Adrenal gland (tissue), 19 donors: ENCODE measurements at regions of chr11 and their contacts with region 1.

Region 1: DNA sequence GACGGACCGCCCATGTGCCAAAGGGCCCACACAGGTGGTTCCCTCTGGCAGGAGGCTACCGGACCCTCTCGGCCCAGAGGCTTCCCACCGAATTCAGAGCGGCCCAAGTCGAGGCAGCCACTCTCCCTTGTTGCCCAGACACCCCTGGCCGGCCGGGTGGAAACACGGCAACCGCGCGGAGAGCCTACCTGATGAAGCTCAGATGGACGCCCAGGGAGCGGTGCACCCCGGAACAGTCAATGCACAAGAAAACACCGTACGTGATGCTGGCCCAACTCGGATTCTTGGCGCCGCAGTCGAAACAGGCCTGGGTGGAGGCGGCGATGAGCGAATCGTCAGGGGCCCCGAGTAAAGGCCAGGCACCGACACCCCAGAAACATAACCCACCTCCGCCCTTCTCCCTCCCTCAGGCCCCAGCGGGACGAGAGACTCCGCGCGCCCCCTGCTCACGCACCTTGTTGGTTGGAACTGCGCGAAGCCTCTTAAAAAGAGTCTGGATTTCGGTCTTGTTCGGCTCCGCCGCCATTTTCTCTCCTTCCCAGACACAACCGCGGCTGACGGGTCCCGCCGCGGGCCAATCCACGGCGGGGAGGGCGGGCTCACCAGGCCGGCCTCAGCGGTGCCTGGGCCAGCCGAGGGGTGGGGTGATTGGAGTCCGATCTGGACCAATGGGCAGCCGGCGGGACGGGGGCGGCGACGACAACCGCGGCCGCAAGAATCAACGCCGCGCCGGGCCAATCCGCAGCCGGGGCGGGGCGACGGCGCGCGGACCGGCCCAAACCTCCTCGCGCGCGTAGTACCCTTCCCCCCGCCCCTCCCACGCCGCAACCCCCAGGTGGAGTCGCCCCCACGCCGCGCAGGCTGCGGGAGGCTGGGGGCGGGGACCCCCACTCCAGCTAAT is at the start of gene ARFGAP2:
- DNase-seq: peak; percentile 96 to 98 (median 97)
- H3K4me3 ChIP-seq: peak within 1 kb of the TSS; percentile 84 to 97 (median 96)
- H3K27ac ChIP-seq: peak within 1 kb of the TSS; percentile 91 to 99 (median 97)
- H3K4me1 ChIP-seq: peaks cover 24 to 40% of the 10 kb centered on the region in 2 donors
- H3K27me3 ChIP-seq: no peaks in the 10 kb centered on the region
- CTCF ChIP-seq: no peak
- POLR2A ChIP-seq: peak in 1 of 2 donors; percentile 51
- total RNA-seq, gene ARFGAP2: 74.4 to 411 (median 122) TPM

Region 2: DNA sequence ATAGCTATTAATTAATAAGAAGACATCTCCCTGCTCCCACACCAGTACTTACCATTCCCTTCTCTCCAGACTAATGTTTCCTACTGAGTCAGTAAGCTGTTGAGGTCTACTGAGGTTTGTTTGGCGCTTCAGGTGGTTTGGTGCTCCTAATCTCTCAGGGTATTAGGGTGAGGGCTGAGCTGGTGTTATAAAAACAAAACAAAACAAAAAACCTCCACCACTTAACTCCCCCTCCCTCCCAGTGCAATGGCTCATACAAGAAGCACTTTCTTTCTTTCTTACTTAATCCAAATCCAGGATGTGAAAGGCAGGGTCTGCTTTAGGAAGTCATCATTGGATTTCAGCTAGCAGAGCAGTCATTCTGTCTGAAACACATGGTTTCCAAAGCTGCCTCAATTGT is 224.7 kb before region 1 on chr11:
- intact Hi-C with region 1: no loop called
- DNase-seq: no peak
- H3K4me3 ChIP-seq: no peak overlapping the region
- H3K27ac ChIP-seq: no peak overlapping the region
- H3K4me1 ChIP-seq: peaks cover 0 to 13% of the 10 kb centered on the region in 2 donors
- H3K27me3 ChIP-seq: no peaks in the 10 kb centered on the region
- CTCF ChIP-seq: no peak
- POLR2A ChIP-seq: no peak

Region 3: GRCh38 chr11:47216121-47216798 is 39.7 kb after region 1 on chr11:
- intact Hi-C with region 1: loop called in 1 of 2 experiments (anchors 5 kb)
- DNase-seq: peak; percentile 53 to 84 (median 79)
- H3K4me3 ChIP-seq: peak overlapping the region in 2 of 4 donors; percentile 44 to 66
- H3K27ac ChIP-seq: peak overlapping the region in 3 of 5 donors; percentile 91 to 95 (median 94)
- H3K4me1 ChIP-seq: peaks cover 33 to 45% of the 10 kb centered on the region in 2 donors
- H3K27me3 ChIP-seq: no peaks in the 10 kb centered on the region
- CTCF ChIP-seq: no peak
- POLR2A ChIP-seq: no peak

Region 4: DNA sequence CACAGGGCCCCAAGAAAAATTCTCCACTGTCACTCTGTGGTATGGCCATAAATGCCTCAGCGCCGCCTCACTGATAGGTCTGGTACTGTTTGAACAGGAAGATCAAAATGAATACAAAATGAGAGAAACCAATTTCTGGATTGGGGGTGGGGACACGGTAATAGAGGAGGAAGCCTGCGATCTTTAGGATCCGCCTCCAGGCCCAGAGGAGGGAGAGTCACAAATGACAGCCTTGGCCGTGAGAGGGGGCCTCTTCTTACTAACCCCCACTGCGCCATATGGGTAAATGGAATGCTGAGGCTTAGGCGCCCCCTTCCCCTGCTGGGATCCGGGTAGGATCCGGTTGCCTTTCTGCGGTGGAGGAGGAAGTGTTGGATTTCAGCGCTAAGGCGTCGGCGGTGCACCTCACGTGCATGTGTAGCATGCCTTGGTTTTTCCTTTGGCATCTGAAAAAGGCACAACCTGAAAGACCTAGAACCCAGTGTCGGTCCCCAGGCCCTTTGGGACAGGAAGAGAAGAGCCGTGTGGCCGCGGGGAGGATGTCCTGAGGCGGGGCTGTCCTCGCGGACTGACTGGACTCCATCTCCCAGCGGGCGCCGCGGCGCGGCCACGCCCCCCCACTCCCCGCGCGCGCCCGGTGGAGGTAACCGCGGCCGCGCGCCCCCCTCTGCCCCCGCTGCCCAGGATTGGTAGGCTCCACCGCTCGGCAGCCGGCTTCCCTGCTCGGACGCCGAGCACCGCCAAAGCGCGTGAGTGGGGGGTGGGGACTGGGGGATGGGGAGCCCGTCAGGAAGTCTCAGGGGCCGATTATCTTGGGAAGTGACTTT is 92.6 kb after region 1 on chr11:
- intact Hi-C with region 1: loop called (anchors 5 to 10 kb)
- DNase-seq: peak; percentile 92 to 95 (median 94)
- H3K4me3 ChIP-seq: peak overlapping the region in 3 of 4 donors; percentile 40 to 89 (median 44)
- H3K27ac ChIP-seq: peak overlapping the region; percentile 65 to 98 (median 91)
- H3K4me1 ChIP-seq: peaks cover 5 to 48% of the 10 kb centered on the region in 2 donors
- H3K27me3 ChIP-seq: no peaks in the 10 kb centered on the region
- CTCF ChIP-seq: peak in 3 of 6 experiments; percentile 26 to 54 (median 30)
- POLR2A ChIP-seq: peak in 1 of 2 donors; percentile 26

Region 5: DNA sequence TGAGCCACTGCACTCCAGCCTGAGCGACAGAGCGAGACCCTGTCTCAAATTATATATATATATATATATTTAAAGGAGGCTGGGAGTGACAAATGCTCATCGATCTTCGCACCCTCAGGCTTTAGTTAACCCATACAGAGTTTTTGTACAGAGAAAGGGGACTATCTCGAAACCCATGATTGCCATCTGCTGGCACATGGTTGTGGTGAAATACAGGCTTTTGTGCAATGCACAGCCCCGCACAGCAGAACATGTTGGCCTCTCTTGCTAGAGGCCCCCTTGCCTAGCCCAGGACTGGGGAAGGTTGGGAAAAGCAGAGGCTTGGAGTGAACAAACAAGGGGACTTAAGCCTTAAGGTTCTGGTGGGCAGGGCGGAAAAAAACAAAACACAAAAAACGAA is 172.3 kb after region 1 on chr11:
- intact Hi-C with region 1: loop called (anchors 5 kb)
- DNase-seq: peak in 3 of 7 donors; percentile 39 to 65 (median 44)
- H3K4me3 ChIP-seq: no peak overlapping the region
- H3K27ac ChIP-seq: no peak overlapping the region
- H3K4me1 ChIP-seq: peaks cover 14 to 16% of the 10 kb centered on the region in 2 donors
- H3K27me3 ChIP-seq: no peaks in the 10 kb centered on the region
- CTCF ChIP-seq: peak in 4 of 6 experiments; percentile 12 to 31 (median 16)
- POLR2A ChIP-seq: no peak

Region 6: DNA sequence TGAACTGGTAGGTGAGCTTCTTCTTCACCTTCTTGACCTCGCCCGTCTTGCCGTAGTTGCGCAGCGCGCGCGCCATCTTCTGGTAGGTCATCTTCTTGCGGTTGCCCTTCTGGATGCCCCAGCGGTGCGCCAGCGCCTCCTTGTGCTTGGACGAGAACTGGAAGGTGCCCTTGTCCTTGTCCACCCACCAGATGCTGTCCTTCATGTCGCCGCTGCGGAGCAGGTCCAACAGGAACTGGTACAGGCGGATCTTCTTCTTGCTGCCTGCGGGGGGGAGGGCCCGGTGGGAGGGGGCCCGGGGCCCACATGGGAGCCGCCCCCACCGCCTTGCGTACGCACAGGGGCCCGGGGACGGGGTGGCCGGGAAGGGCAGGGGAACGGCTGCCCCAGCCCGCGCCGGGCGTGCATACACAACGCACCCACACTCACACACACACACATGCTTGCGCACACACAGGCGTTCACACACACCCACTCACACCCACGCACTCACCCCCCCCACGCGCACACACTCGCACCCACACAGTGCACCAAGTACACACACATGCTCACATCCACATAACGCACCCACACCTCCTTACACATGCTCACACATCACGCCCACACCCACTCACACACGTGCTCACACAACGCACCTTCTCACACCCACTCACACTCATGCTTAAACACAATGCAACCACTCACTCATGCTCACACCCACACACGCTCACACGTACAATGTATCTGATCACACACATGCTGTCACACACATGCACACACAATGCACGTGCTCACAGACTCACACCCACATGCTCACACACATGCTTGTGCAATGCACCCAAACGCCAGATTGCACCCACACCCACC is 178.9 kb after region 1 on chr11:
- intact Hi-C with region 1: loop called in 1 of 2 experiments (anchors 5 kb)
- DNase-seq: peak; percentile 96 to 99 (median 98)
- H3K4me3 ChIP-seq: peak overlapping the region in 2 of 4 donors; percentile 28 to 58
- H3K27ac ChIP-seq: peak overlapping the region in 2 of 5 donors; percentile 52 to 67
- H3K4me1 ChIP-seq: peaks cover 21% of the 10 kb centered on the region in 2 donors
- H3K27me3 ChIP-seq: no peaks in the 10 kb centered on the region
- CTCF ChIP-seq: peak; percentile 88 to 100 (median 98)
- POLR2A ChIP-seq: peak in 1 of 2 donors; percentile 12

Region 7: DNA sequence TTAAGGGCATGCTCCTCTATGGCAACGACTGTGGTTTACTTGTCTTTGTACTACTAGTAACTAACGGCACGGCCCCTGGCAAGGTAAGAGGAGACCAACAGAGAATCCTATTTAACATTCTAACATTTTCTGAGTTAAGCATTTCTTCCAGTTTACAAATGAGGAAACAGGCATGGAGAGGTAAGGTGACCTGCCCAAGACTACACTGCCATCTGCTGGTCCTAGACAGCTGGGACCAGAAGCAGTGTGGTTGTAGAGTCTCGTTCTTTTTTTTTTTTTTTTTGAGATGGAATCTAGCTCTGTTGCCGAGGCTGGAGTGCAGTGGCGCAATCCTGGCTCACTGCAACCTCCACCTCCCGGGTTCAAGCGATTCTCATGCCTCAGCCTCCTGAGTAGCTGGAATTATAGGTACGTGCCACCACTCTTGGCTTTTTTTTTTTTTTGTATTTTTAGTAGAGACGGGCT is 277.6 kb after region 1 on chr11:
- intact Hi-C with region 1: no loop called
- DNase-seq: peak; percentile 79 to 93 (median 88)
- H3K4me3 ChIP-seq: no peak overlapping the region
- H3K27ac ChIP-seq: no peak overlapping the region
- H3K4me1 ChIP-seq: peaks cover 0 to 3% of the 10 kb centered on the region in 2 donors
- H3K27me3 ChIP-seq: no peaks in the 10 kb centered on the region
- CTCF ChIP-seq: peak; percentile 67 to 97 (median 82)
- POLR2A ChIP-seq: no peak